Sigmoid colon (tissue), 7 donors: ENCODE measurements at regions of chrX and their contacts with region 1.

Region 1: GRCh38 chrX:137565921-137566745 is at the start of gene ZIC3:
- DNase-seq: peak; percentile 67
- H3K4me3 ChIP-seq: peak within 1 kb of the TSS; percentile 40 to 64 (median 53)
- H3K27ac ChIP-seq: no peak within 1 kb of the TSS
- H3K4me1 ChIP-seq: peaks cover 0 to 29% (median 17%) of the 10 kb centered on the region in 4 donors
- H3K27me3 ChIP-seq: peaks cover 44 to 94% (median 47%) of the 10 kb centered on the region in 3 donors
- CTCF ChIP-seq: no peak
- EP300 ChIP-seq: no peak
- POLR2A ChIP-seq: no peak
- total RNA-seq, gene ZIC3: not detected

Region 2: DNA sequence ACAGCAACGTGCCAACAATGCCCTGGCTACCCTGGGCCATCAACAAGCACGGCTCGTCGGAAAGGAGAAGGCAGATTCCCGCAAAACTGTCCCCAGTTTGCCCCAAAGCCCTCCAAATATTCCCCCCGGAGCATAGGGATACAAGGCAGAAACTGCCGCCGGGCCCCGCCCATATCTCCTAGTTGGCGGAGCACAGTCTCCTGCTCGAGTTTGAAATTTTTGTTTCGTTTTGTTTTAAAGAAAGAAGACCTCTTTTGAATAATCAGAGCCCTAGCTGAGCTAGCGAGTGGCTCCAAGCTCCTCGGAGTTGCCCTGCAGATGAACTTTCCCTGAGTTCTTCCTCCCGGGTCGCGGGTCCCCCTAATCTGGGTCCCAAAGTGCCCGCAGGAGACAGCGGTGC is 138.3 kb before region 1 on chrX:
- intact Hi-C with region 1: loop called (anchors 10 kb)
- DNase-seq: no peak
- H3K4me3 ChIP-seq: peak overlapping the region; percentile 5 to 48 (median 42)
- H3K27ac ChIP-seq: no peak overlapping the region
- H3K4me1 ChIP-seq: peaks cover 0 to 22% (median 15%) of the 10 kb centered on the region in 4 donors
- H3K27me3 ChIP-seq: peaks cover 49 to 77% (median 60%) of the 10 kb centered on the region in 3 donors
- CTCF ChIP-seq: no peak
- EP300 ChIP-seq: no peak
- POLR2A ChIP-seq: no peak

Region 3: GRCh38 chrX:137654472-137654871 is 88.3 kb after region 1 on chrX:
- intact Hi-C with region 1: no loop called
- DNase-seq: no peak
- H3K4me3 ChIP-seq: no peak overlapping the region
- H3K27ac ChIP-seq: no peak overlapping the region
- H3K4me1 ChIP-seq: no peaks in the 10 kb centered on the region
- H3K27me3 ChIP-seq: no peaks in the 10 kb centered on the region
- CTCF ChIP-seq: no peak
- EP300 ChIP-seq: no peak
- POLR2A ChIP-seq: no peak

Region 4: DNA sequence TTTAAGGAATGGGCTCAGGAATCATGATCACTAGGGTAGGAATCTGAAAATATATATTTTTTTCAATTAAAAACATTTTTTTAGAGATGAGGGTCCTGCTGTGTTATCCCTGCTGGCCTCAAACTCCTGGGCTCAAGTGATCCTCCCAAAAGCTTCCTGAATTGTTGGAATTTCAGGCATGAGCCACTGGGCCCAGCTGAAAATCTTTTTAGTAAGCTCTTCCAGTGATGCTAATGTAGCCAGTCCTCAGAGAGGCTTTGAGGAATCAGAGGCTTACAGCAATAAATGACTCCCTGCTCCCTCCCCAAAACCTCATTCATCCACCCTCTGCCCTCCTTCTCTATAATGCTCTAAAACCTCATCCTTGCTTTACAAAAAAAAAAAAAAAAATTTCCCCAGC is 129.3 kb after region 1 on chrX:
- intact Hi-C with region 1: no loop called
- DNase-seq: no peak
- H3K4me3 ChIP-seq: no peak overlapping the region
- H3K27ac ChIP-seq: no peak overlapping the region
- H3K4me1 ChIP-seq: no peaks in the 10 kb centered on the region
- H3K27me3 ChIP-seq: no peaks in the 10 kb centered on the region
- CTCF ChIP-seq: no peak
- EP300 ChIP-seq: no peak
- POLR2A ChIP-seq: no peak